ENCODE measurements at regions of chr4 and their contacts with region 1.

Region 1: DNA sequence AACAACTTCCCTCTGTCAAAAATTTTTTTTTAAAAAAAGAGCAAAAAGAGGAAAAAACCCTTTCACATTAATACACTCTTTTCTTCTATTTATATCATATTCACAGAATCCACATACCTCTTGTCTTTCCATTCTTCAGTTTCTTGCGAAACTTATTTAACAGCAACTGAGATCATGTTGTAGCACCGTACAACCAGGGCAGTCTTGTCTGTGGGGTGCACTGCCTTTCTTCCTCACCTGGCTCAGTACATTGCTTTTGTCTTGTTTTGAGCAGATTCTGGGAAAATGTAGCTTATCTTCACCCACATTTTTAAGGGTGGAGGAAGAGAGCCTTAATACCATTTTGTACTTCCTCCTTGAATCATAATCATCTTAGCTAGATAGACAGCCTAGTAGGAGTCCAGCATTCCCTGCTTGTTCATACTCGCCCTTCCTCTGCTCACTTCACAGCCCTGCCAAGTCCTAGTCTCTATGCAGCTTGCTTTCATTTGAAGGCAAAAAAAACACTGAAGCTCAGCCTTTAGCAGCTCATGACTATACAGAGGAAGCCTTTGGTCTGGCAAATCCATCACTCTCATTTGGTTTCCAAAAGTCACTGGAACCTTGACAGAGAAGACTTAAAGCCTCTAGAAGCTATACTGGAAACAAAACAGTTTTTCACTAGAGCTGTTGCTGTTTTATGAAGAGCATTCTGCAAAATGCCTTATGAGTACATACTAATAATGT is 140.6 kb upstream of the BANK1 start:
- DNase-seq: no peak
- ATAC-seq: peak; percentile 61

Region 2: DNA sequence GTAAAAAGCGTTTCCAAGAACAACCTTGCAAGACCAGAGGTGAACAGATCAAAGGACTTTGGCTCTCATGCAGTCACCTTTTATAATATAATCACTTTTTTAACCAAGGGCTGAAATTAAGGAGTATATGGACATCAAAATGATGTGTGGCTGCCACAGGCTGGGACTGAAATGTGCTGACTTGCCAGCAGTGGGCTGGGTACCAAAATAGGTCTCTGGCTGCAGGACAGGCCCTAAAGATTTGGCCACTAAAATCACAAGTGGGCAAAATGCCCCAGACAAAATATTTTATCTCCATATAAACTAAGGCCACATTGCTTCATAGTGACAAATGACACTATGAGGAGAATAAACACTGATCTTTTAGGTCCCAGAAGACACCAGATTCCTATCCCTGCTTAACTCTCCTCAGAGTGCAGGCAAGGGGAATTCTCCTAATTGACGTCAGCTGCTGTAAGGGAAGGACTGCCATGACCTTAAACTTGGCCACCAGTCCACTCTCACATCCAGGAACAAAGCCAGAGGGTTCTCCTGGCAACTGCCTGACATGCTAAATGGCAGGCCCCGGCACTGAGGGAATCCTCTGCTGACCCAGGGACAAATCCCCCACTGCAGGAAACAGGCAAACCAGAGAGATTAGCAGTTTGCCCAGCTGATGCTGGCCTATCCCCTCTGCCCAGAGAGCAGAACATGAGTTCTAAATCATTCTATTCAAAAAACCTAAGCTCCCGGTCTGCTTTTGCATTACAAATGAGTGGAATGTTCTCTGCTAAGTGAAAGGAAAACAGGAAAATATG is 458.5 kb before region 1 on chr4:
- intact Hi-C with region 1: loop called (anchors 5 kb)
- DNase-seq: peak; percentile 78
- ATAC-seq: peak; percentile 99

Region 3: GRCh38 chr4:101500742-101501141 is 149.2 kb before region 1 on chr4:
- intact Hi-C with region 1: no loop called
- DNase-seq: no peak
- ATAC-seq: no peak

Region 4: GRCh38 chr4:102139132-102139573 is 489.2 kb after region 1 on chr4:
- intact Hi-C with region 1: no loop called
- DNase-seq: no peak
- ATAC-seq: no peak